ENCODE measurements at regions of chr3 and their contacts with region 1.

Region 1: DNA sequence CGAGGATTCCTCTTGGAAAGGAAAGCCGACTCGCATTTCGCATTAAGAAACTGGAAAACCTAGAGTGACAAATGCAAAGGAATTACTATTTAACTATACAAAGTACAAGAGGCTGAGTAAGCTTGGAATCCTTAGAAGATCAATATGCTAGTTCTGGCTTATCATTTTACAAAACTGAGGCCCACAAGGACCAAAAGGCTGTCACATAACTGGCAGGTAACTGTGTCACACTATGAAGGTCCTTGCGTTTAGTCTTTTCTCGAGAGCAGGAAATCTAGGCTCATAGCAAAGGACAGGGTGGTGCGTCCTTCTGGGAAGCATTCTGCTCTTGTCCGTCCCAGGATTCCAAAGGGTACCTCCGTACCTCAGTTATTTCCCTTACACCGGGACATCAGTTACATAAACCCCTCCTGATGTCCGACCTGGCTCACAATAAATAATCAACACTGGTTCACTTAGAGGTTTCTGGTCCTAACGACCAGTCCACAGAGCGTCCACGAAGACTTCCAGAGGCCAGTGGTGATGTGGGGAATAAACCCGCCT is 577 bp downstream of the RPL24 start:
- DNase-seq: no peak
- H3K4me3 ChIP-seq: peak overlapping the region; percentile 86 to 100 (median 98)
- H3K27ac ChIP-seq: peak overlapping the region; percentile 96
- H3K4me1 ChIP-seq: peaks cover 0 to 4% (median 2%) of the 10 kb centered on the region in 4 experiments; a peak in 4 of 7 replicates
- H3K27me3 ChIP-seq: no peaks in the 10 kb centered on the region
- CTCF ChIP-seq: no peak
- EP300 ChIP-seq: no peak
- POLR2A ChIP-seq: no peak
- RAD21 ChIP-seq: no peak

Region 2: DNA sequence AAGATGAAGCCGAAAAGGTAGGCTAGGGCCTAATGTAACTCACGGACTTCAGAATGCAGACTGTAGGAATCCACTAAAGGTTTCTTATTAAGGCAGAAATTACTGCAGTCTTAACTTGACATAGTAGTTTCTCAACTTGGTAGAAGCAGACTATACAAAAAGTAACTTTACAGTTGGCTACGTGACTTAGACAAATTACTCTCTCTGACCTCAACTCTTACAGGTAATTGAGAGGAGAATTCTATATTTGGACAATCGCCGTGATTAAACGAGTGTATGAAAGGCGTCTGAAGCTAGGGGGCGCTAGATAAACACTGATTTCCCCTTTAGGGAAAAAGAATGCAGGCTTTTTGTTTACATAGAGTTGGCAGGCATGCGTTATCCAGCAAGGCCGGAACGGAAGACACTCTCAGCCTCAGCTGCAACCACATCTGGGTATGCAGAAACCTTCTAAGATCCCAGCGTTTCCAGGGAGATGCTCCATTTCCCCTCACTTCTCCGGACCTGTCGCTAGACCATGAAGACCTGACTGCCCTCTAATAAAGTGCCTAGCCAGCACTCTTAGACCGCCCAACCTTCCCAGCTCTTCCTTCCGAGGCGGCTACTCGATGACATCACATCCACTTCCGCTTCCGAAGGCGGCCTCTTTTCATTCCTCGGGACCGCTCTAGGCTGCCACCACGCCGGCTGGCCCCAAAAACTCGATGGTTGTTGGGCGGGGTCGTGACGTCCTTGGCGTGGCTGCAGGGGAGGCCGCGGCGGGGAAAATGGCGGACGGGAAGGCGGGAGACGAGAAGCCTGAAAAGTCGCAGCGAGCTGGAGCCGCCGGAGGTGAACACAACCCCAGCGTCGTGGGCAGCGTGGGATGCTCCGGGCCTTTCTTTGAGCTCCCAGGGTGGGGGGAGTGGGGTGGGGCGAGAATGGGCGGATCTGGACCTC is 112.2 kb before region 1 on chr3 and contains the start of gene PCNP:
- CTCF ChIA-PET with region 1: interaction called, 5 read pairs
- POLR2A ChIA-PET with region 1: interaction called, 23 read pairs
- DNase-seq: peak; percentile 90 to 98
- H3K4me3 ChIP-seq: peak within 1 kb of the TSS; percentile 82 to 98 (median 91)
- H3K27ac ChIP-seq: peak within 1 kb of the TSS; percentile 96
- H3K4me1 ChIP-seq: peaks cover 0 to 3% (median 0%) of the 10 kb centered on the region in 4 experiments; a peak in 2 of 7 replicates
- H3K27me3 ChIP-seq: no peaks in the 10 kb centered on the region; a peak in 1 of 7 replicates
- CTCF ChIP-seq: peak in 2 of 3 experiments; percentile 58 to 80; a peak in 3 of 4 replicates
- EP300 ChIP-seq: peak in 1 of 2 experiments; percentile 53; a peak in 1 of 3 replicates
- POLR2A ChIP-seq: peak; percentile 85 to 93
- RAD21 ChIP-seq: peak; percentile 68 to 73
- total RNA-seq, gene PCNP: 188 and 192 TPM in 2 replicates

Region 3: GRCh38 chr3:101703169-101703568 is 17.2 kb after region 1 on chr3:
- CTCF ChIA-PET with region 1: interaction called, 13 read pairs
- POLR2A ChIA-PET with region 1: interaction called, 16 read pairs
- DNase-seq: no peak
- H3K4me3 ChIP-seq: no peak overlapping the region
- H3K27ac ChIP-seq: no peak overlapping the region
- H3K4me1 ChIP-seq: no peaks in the 10 kb centered on the region
- H3K27me3 ChIP-seq: no peaks in the 10 kb centered on the region
- CTCF ChIP-seq: no peak
- EP300 ChIP-seq: no peak
- POLR2A ChIP-seq: no peak
- RAD21 ChIP-seq: no peak

Region 4: DNA sequence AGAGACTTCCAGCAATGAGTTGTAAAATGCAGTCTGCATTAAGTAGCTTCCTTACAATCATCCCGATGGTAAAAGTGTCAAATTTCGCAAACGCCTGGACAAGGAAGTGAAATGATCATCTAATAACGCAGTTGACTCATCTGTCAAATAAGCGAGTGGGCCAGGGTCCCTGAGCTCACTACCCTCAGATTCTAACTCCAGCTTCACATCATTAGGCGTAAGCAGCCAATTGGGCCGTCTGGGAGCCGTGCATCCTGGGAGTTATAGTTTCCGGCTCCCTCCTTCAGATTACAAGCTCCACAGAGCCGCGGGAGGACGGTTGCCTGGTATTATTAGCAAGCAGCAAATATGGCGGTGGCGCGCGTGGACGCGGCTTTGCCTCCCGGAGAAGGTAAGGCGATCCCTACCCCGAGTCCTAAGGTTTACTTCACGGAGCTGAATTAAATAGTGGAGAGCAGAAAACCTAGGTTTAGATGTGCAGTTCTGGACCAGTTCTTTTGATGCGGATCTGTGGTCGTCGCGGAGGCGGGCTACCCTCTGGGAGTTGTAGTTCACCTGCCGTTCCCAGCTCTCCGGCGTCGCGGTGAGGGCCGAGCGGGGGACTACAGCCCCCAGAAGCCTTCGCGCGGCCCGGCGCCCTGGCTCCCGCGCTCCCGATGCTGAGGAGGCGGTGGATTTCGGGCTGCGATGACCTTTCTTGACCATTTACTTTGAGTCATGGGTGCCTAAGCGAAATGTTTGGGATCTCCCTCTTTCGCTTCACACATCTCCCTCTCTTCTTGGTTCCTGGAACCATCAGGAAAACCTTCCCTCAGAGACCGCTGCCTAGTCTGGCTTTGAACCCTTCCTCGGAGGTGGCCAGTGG is 38.6 kb after region 1 on chr3 and contains the start of gene CEP97:
- CTCF ChIA-PET with region 1: interaction called, 5 read pairs
- POLR2A ChIA-PET with region 1: interaction called, 22 read pairs
- DNase-seq: peak; percentile 70 to 92
- H3K4me3 ChIP-seq: peak within 1 kb of the TSS; percentile 92 to 99 (median 98)
- H3K27ac ChIP-seq: peak within 1 kb of the TSS; percentile 25; the same call in 1 of the 2 replicates
- H3K4me1 ChIP-seq: no peaks in the 10 kb centered on the region
- H3K27me3 ChIP-seq: no peaks in the 10 kb centered on the region
- CTCF ChIP-seq: no peak
- EP300 ChIP-seq: no peak
- POLR2A ChIP-seq: peak in 1 of 2 experiments; percentile 56; a peak in 1 of 3 replicates
- RAD21 ChIP-seq: no peak
- total RNA-seq, gene CEP97: 13.2 and 15.1 TPM in 2 replicates

Region 5: GRCh38 chr3:101779047-101779821 is 93.3 kb after region 1 on chr3 and contains the start of gene NXPE3:
- CTCF ChIA-PET with region 1: no interaction called
- POLR2A ChIA-PET with region 1: no interaction called
- DNase-seq: peak; percentile 47 to 97
- H3K4me3 ChIP-seq: peak within 1 kb of the TSS; percentile 70 to 88 (median 75)
- H3K27ac ChIP-seq: no peak within 1 kb of the TSS
- H3K4me1 ChIP-seq: peaks cover 5 to 11% (median 6%) of the 10 kb centered on the region in 4 experiments; a peak in 6 of 7 replicates
- H3K27me3 ChIP-seq: peaks cover 0 to 7% (median 4%) of the 10 kb centered on the region in 4 experiments; a peak in 4 of 7 replicates
- CTCF ChIP-seq: no peak
- EP300 ChIP-seq: no peak
- POLR2A ChIP-seq: peak in 1 of 2 experiments; percentile 49; a peak in 1 of 3 replicates
- RAD21 ChIP-seq: no peak
- total RNA-seq, gene NXPE3: 22.7 and 23.3 TPM in 2 replicates

Region 6: DNA sequence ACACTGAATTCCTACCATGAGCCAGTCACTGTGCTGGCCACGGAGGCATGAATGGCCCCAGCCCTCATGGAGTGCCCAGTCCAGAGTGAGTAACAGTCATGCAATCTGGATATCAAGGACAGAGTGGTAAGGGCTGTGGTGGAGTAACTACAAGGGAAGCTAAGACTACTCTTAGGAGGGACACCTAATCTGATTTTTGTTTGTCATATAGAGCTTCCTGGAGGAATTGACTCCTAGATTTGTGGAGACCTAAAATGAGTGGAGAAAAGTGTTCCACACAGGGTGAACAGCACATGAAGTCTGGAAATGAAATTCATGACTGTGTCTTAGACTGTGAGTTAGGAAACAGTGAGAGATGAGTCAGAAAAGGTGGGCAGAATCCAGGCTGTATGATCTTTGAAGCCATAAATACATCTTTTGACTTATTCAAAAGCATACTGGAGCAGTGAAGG is 383.3 kb after region 1 on chr3:
- CTCF ChIA-PET with region 1: no interaction called
- POLR2A ChIA-PET with region 1: no interaction called
- DNase-seq: no peak
- H3K4me3 ChIP-seq: no peak overlapping the region
- H3K27ac ChIP-seq: no peak overlapping the region
- H3K4me1 ChIP-seq: no peaks in the 10 kb centered on the region
- H3K27me3 ChIP-seq: no peaks in the 10 kb centered on the region
- CTCF ChIP-seq: no peak
- EP300 ChIP-seq: no peak
- POLR2A ChIP-seq: no peak
- RAD21 ChIP-seq: no peak